OCI-LY7 (cell line): ENCODE measurements at regions of chr9 and their contacts with region 1.

Region 1: DNA sequence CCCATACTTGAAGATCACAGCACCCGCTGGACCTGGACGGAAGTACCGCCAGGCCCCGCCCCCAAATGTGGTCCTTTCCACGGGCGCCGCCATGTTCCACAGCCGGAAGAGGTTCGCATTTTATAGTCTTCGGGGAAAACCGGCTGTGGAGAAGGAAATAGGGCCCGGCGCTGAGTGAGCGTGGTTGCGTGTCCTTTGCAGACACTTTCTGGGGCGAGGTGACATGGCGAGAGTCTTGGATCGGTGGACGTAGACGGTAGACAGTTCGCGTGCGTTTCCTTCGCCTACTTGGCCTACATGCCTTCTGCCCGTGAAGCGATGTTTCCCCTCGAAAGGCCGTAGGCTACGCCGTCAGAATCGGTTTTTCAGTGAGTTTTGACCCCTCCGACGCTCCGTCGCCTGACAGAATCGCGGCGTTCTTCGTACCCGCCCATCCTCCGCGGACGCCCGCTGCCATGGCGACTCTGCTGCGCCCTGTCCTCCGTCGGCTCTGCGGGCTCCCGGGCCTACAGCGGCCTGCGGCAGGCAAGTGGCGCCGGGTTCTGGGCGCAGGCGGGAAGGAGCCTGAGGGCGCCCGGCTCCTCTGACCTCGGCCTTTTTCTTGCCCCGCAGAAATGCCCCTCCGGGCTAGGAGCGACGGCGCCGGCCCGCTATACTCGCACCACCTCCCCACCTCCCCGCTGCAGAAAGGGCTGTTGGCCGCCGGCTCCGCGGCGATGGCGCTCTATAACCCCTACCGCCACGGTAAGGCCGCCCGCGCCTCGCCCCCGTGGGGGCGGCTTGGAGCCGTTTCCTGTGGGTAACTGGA is at the starts of genes COQ4 and TRUB2:
- DNase-seq: peak; percentile 95
- H3K4me3 ChIP-seq: peak within 1 kb of the TSS; percentile 81
- H3K27ac ChIP-seq: peak within 1 kb of the TSS; percentile 77
- H3K4me1 ChIP-seq: peaks cover 22% of the 10 kb centered on the region
- CTCF ChIP-seq: peak; percentile 31; the same call in 1 of the 2 replicates
- total RNA-seq, gene COQ4: 42.4 and 53.4 TPM in 2 replicates
- total RNA-seq, gene TRUB2: 29.7 and 31.3 TPM in 2 replicates

Region 2: GRCh38 chr9:128275996-128276573 is 46.5 kb before region 1 on chr9 and contains the starts of genes GOLGA2 and SWI5:
- CTCF ChIA-PET with region 1: no interaction called
- POLR2A ChIA-PET with region 1: no interaction called
- intact Hi-C with region 1: loop called (anchors 5 kb)
- DNase-seq: peak; percentile 100
- H3K4me3 ChIP-seq: peak within 1 kb of the TSS; percentile 97
- H3K27ac ChIP-seq: peak within 1 kb of the TSS; percentile 10
- H3K4me1 ChIP-seq: peaks cover 16% of the 10 kb centered on the region
- CTCF ChIP-seq: no peak
- total RNA-seq, gene GOLGA2: 28.2 and 44.0 TPM in 2 replicates
- total RNA-seq, gene SWI5: 22.7 and 26.2 TPM in 2 replicates

Region 3: GRCh38 chr9:128339771-128340690 is 17.4 kb after region 1 on chr9 and contains the start of gene SLC27A4:
- CTCF ChIA-PET with region 1: no interaction called
- POLR2A ChIA-PET with region 1: interaction called, 8 read pairs
- intact Hi-C with region 1: loop called (anchors 1 kb)
- DNase-seq: peak; percentile 88
- H3K4me3 ChIP-seq: peak within 1 kb of the TSS; percentile 82
- H3K27ac ChIP-seq: peak within 1 kb of the TSS; percentile 18
- H3K4me1 ChIP-seq: peaks cover 5% of the 10 kb centered on the region
- CTCF ChIP-seq: no peak
- total RNA-seq, gene SLC27A4: 12.3 and 14.2 TPM in 2 replicates